ENCODE measurements at regions of chr4 and their contacts with region 1.

Region 1: GRCh38 chr4:16289897-16290554 is 63.8 kb upstream of the TAPT1 start:
- H3K4me3 Mint-ChIP-seq: no peak overlapping the region
- H3K27ac Mint-ChIP-seq: no peak overlapping the region
- H3K4me1 Mint-ChIP-seq: peaks cover 21% of the 10 kb centered on the region
- H3K27me3 Mint-ChIP-seq: peaks cover 3% of the 10 kb centered on the region

Region 2: DNA sequence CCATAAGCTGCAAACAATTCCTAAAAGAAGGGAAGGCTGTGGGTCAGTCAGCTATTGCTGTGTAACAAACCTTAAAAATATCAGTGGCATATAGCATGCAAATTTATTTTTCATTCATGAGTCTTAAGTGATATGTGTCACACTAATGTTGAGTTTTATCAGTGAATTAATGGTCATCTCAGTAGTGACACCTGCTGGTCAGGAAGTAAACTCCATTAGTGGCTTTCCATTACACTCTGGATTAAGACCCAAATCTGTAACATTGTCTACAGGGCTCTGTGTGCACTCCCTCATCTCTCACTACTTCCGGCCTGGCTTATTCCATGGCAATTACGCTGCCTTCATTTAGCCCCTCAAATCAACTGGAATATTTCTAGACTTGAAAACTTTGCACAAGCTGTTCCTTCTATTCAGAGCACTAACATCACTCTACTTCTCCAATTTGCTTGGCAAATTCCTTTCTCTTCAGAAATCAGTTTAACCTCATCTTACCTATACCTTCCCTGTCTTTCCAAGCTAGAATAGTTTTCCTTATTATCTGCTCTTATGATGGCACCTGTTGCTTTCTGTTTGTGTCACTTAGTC is 153.6 kb after region 1 on chr4:
- intact Hi-C with region 1: loop called (anchors 1 kb)
- H3K4me3 Mint-ChIP-seq: no peak overlapping the region
- H3K27ac Mint-ChIP-seq: no peak overlapping the region
- H3K4me1 Mint-ChIP-seq: peaks cover 8% of the 10 kb centered on the region
- H3K27me3 Mint-ChIP-seq: peaks cover 3% of the 10 kb centered on the region

Region 3: DNA sequence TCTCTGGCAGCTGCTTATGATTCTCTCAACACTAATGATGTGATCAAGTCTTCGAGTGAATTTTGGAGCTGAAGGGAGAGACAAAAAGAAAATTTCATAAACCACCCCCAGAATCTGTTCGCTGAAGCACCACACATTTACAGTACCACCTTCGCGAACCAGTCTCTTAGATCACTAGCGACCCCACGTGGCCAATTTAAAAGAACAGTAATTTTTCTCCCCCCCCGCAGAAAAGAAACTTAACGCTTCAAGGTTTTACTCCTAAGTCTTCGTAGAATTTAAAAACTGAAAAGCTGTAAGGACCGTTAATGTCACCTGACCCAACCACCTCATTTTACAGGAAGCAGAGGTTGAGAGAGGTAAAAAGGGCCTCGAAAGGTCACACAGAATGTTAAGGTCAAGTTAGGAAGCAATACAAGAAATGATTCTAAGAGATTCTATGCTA is 1034.4 kb after region 1 on chr4:
- intact Hi-C with region 1: loop called (anchors 5 kb)
- H3K4me3 Mint-ChIP-seq: no peak overlapping the region
- H3K27ac Mint-ChIP-seq: no peak overlapping the region
- H3K4me1 Mint-ChIP-seq: peaks cover 12% of the 10 kb centered on the region
- H3K27me3 Mint-ChIP-seq: peaks cover 2% of the 10 kb centered on the region

Region 4: DNA sequence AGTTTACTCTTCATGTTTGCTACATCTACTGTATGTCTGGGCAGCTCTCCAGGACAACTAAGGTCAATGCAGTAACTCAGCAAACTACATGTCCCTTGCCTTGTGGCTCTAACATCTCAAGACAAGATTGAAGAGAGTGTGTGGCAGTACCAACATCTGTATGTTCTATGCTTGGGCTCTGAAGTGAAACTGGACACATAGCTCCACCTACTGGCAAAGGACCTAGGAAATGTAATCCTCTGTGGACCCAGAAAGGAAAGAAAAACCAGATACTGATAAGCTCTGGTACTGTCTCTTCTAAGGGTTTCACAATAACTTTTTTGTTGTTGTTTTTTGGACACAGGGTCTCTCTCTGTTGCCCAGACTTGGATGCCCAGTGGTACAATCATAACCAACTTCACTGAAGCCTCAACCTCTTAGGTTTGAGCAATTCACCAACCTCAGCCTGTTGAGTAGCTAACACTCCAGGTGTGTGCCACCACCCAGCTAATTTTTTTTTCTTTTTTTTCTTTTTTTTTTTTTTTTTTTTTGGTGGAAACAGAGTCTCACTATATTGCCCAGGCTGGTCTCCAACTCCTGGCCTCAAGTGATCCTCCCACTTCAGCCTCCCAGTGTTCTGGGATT is 1157.8 kb after region 1 on chr4:
- intact Hi-C with region 1: loop called (anchors 10 kb)
- H3K4me3 Mint-ChIP-seq: no peak overlapping the region
- H3K27ac Mint-ChIP-seq: no peak overlapping the region
- H3K4me1 Mint-ChIP-seq: no peaks in the 10 kb centered on the region
- H3K27me3 Mint-ChIP-seq: no peaks in the 10 kb centered on the region

Measured in dendritic cell treated with granulocyte-macrophage colony-stimulating factor and Interleukin-4, amounts not matched to agents 40 ng/mL and 50 ng/mL, for 4 days (primary cell).